ENCODE measurements at regions of chr1 and their contacts with region 1.

Region 1: DNA sequence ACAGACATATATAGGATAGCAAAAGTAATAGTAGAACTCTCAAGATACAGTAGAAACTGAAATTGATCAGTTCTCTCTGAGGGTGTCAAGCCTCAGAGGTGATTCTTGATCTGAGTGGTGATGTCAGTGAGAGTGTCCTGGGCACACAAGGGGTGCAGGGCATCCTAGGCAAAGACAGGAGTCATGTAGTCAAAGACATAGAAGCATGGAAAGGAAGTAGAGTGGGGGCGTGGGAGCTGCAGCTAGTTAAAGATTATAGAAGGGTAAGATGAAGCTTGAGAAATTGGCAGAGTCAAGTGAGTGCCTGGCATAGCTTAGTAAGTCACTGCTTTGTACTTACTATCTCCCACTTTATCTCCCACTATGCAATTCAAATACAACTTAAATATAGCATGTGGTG is 22.8 kb downstream of the CDC7 start:
- DNase-seq: no peak
- H3K4me3 Mint-ChIP-seq: no peak overlapping the region
- H3K27ac Mint-ChIP-seq: peak overlapping the region; percentile 38
- H3K4me1 Mint-ChIP-seq: peaks cover 47% of the 10 kb centered on the region
- H3K27me3 Mint-ChIP-seq: no peaks in the 10 kb centered on the region

Region 2: DNA sequence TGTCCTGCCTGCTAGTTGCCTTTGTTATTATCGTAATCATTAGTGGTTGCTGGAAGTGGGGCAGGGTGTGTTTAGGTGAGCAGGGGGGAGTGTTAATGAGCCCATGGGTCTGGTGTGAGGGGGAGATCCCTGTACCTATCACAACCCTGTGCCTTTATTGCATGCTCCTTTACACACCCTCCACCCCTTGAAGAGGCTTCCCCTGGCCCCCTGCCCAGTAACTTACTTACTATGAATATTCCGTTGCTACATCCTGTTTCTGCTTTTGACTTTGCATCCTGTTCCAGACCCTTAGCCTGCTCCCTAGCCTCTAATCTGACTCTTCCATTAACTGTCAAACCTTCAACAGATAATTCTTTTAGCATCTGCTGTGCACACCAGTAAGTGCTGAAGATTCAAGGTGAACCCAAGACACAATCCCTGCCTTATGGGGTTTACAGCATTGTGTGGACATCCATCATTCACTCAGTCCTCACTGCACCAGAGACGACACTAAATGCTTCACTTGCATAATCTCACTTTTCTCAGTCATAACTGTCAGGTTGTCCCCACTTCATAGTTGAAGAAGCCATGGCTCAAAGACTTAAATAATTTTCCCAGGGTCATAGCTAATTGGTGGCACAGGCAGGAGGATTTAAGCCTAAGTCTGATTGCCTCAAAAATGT is 25.0 kb after region 1 on chr1:
- intact Hi-C with region 1: loop called (anchors 2 kb)
- DNase-seq: no peak
- H3K4me3 Mint-ChIP-seq: peak overlapping the region; percentile 43
- H3K27ac Mint-ChIP-seq: peak overlapping the region; percentile 80
- H3K4me1 Mint-ChIP-seq: peaks cover 68% of the 10 kb centered on the region
- H3K27me3 Mint-ChIP-seq: peaks cover 4% of the 10 kb centered on the region

Region 3: DNA sequence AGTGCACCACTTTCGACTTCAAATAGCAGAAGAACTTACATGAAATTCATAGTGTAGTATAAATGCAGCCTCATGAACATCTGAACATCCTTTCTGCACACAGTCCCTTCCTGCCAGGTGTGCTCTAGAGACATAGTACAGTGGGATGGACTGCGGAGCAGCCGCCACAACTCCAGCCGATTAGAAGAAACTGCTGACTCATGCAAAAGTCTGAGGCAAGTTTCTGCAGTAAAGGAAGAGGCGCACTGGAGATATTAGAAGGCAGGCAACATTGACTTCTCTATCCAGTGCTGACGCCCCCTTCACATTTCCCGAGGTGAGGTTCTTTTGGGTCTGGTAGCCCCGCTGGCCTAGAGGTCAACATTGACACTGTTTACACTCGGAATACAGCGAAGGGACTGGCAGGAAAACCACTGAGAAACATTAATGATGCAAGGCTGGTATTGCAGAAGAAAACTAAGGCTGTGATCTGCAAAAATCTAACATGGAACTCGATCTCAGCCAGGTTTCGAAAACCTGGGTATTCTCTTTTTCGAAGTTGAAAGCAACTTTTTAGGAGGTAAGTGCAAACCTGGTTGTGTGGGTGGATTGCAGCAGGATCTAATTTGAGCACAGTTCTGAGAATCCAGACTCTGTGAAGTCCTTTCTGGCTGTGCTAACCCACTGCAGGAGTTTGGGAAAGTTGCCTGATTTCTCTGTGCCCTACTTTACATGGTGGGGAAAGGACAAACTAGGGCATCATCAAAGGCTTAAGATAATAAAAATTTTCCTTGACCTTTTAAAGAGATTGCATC is 67.9 kb after region 1 on chr1:
- intact Hi-C with region 1: loop called (anchors 5 kb)
- DNase-seq: peak; percentile 16
- H3K4me3 Mint-ChIP-seq: peak overlapping the region; percentile 45
- H3K27ac Mint-ChIP-seq: peak overlapping the region; percentile 82
- H3K4me1 Mint-ChIP-seq: peaks cover 35% of the 10 kb centered on the region
- H3K27me3 Mint-ChIP-seq: no peaks in the 10 kb centered on the region

Region 4: DNA sequence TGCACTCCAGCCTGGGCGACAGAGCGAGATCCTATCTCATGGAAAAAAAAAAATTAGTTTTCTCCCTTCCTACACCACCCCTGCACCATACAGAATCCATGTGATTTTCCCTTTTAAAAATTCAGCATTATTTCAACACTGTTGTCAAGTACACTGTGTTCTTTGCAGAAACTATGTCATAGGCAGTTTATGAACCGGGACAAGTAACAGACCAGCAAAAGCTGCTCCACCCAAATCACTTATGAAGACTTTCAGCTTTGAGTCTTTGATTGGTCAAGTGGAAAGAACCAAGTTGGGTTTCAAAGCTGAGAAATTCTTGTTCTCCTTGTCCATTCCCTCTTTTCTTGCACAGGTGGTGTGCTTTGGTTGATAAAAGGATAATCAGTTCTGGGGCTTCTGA is 150.1 kb after region 1 on chr1:
- intact Hi-C with region 1: loop called (anchors 5 kb)
- DNase-seq: no peak
- H3K4me3 Mint-ChIP-seq: no peak overlapping the region
- H3K27ac Mint-ChIP-seq: peak overlapping the region; percentile 71
- H3K4me1 Mint-ChIP-seq: peaks cover 33% of the 10 kb centered on the region
- H3K27me3 Mint-ChIP-seq: no peaks in the 10 kb centered on the region

Region 5: DNA sequence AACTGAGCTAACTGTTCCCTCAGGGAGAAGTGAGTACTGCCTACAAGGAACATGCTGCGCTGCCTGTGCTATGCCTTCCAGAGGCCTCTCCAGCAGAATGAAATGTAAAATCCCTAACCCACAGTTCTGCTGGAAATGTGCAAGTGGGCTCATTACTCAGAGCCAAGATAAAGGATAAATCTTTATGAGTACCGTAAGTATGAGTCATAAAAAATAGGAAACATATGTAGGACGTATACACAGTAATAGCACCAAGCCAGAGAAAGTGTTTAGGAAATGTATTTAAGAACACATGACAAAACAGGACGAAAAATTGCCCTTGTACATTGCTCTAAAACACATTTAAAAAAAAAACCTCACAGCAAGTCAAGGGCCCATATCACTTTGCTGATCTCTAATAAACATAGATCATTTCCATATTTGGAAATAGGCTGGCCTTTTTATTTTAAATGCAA is 257.9 kb after region 1 on chr1:
- intact Hi-C with region 1: no loop called
- DNase-seq: no peak
- H3K4me3 Mint-ChIP-seq: no peak overlapping the region
- H3K27ac Mint-ChIP-seq: no peak overlapping the region
- H3K4me1 Mint-ChIP-seq: peaks cover 13% of the 10 kb centered on the region
- H3K27me3 Mint-ChIP-seq: no peaks in the 10 kb centered on the region